ENCODE measurements at regions of chr19 and their contacts with region 1.

Region 1: GRCh38 chr19:42325273-42325895 is at the start of gene MEGF8:
- DNase-seq: peak; percentile 86 to 99 (median 97)
- ATAC-seq: peak; percentile 96
- H3K4me3 ChIP-seq: peak within 1 kb of the TSS; percentile 95
- H3K4me3 Mint-ChIP-seq: peak within 1 kb of the TSS; percentile 89 to 96 (median 94)
- H3K27ac ChIP-seq: peak within 1 kb of the TSS; percentile 84
- H3K27ac Mint-ChIP-seq: peak within 1 kb of the TSS; percentile 51 to 93 (median 83)
- H3K4me1 ChIP-seq: peaks cover 6 to 7% of the 10 kb centered on the region in 2 donors
- H3K4me1 Mint-ChIP-seq: peaks cover 13 to 29% (median 22%) of the 10 kb centered on the region in 7 donors
- H3K27me3 ChIP-seq: peaks cover 0 to 4% of the 10 kb centered on the region in 2 donors
- H3K27me3 Mint-ChIP-seq: peaks cover 6 to 33% (median 16%) of the 10 kb centered on the region in 5 donors
- total RNA-seq, gene MEGF8: 6.7 to 9.3 (median 8.6) TPM

Region 2: GRCh38 chr19:41959056-41960053 is 366.0 kb before region 1 on chr19 and contains the start of gene RABAC1:
- CTCF ChIA-PET with region 1: no interaction called
- POLR2A ChIA-PET with region 1: no interaction called
- intact Hi-C with region 1: loop called in 1 of 2 experiments (anchors 1 kb)
- DNase-seq: peak; percentile 67 to 91 (median 86)
- ATAC-seq: peak; percentile 95
- H3K4me3 ChIP-seq: peak within 1 kb of the TSS; percentile 78
- H3K4me3 Mint-ChIP-seq: peak within 1 kb of the TSS; percentile 80 to 99 (median 91)
- H3K27ac ChIP-seq: peak within 1 kb of the TSS; percentile 81
- H3K27ac Mint-ChIP-seq: peak within 1 kb of the TSS; percentile 74 to 94 (median 90)
- H3K4me1 ChIP-seq: peaks cover 8 to 9% of the 10 kb centered on the region in 2 donors
- H3K4me1 Mint-ChIP-seq: peaks cover 17 to 22% (median 18%) of the 10 kb centered on the region in 7 donors
- H3K27me3 ChIP-seq: no peaks in the 10 kb centered on the region
- H3K27me3 Mint-ChIP-seq: no peaks in the 10 kb centered on the region
- total RNA-seq, gene RABAC1: 70.4 to 90.9 (median 78.1) TPM

Region 3: GRCh38 chr19:42199440-42200115 is 125.8 kb before region 1 on chr19:
- CTCF ChIA-PET with region 1: interaction called, 3 read pairs
- POLR2A ChIA-PET with region 1: no interaction called
- intact Hi-C with region 1: loop called in 1 of 2 experiments (anchors 1 kb)
- DNase-seq: peak in 8 of 9 donors; percentile 40 to 69 (median 48)
- ATAC-seq: peak; percentile 49
- H3K4me3 ChIP-seq: peak overlapping the region; percentile 52
- H3K4me3 Mint-ChIP-seq: peak overlapping the region; percentile 78 to 97 (median 86)
- H3K27ac ChIP-seq: peak overlapping the region; percentile 82
- H3K27ac Mint-ChIP-seq: peak overlapping the region; percentile 84 to 96 (median 92)
- H3K4me1 ChIP-seq: peaks cover 71 to 75% of the 10 kb centered on the region in 2 donors
- H3K4me1 Mint-ChIP-seq: peaks cover 70 to 89% (median 80%) of the 10 kb centered on the region in 7 donors
- H3K27me3 ChIP-seq: no peaks in the 10 kb centered on the region
- H3K27me3 Mint-ChIP-seq: no peaks in the 10 kb centered on the region

Region 4: GRCh38 chr19:42268704-42269477 is 56.5 kb before region 1 on chr19 and contains the start of gene CIC:
- CTCF ChIA-PET with region 1: no interaction called
- POLR2A ChIA-PET with region 1: interaction called, 4 read pairs
- intact Hi-C with region 1: loop called in 1 of 2 experiments (anchors 1 kb)
- DNase-seq: peak; percentile 95 to 100 (median 99)
- ATAC-seq: peak; percentile 82
- H3K4me3 ChIP-seq: peak within 1 kb of the TSS; percentile 85
- H3K4me3 Mint-ChIP-seq: peak within 1 kb of the TSS in 1 of 10 donors; percentile 94
- H3K27ac ChIP-seq: peak within 1 kb of the TSS; percentile 96
- H3K27ac Mint-ChIP-seq: peak within 1 kb of the TSS in 4 of 9 donors; percentile 98 to 99 (median 99)
- H3K4me1 ChIP-seq: peaks cover 23 to 29% of the 10 kb centered on the region in 2 donors
- H3K4me1 Mint-ChIP-seq: peaks cover 8 to 31% (median 25%) of the 10 kb centered on the region in 7 donors
- H3K27me3 ChIP-seq: no peaks in the 10 kb centered on the region
- H3K27me3 Mint-ChIP-seq: no peaks in the 10 kb centered on the region
- total RNA-seq, gene CIC: 90.4 to 134 (median 102) TPM

Region 5: DNA sequence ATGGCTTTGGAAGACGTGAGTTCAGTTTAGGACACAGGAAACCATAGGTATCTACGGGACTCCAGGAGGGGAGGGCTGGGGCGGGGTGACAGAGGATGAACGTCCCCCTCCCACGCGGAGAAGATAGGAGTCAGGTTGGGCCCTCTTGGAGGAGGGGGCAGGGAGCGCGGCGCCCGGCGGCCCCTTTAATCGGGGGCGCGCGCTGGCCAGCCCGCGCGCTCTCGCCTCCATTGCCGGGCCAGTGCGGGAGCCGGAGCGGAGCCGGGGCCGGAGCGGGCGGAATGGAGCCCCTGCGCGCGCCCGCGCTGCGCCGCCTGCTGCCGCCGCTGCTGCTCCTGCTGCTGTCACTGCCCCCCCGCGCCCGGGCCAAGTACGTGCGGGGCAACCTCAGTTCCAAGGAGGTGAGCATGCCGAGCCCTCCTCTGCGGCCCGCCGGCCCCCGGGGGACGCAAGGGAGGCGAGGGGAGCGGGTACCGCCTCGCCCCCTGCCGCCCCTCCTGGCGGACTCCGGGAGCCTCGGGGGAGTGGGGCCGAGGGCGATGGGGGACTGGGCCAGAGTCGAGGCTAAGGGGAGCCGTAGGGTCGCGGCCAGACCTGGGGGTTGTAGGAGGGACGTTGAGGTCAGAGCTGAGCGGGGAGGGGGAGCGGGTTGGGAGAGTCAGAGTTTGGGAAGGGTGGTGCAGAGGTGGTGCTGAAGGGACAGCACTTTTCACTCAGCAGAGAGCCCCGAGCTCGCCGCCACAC is 12.1 kb before region 1 on chr19 and contains the start of gene TMEM145:
- CTCF ChIA-PET with region 1: no interaction called
- POLR2A ChIA-PET with region 1: interaction called, 4 read pairs
- intact Hi-C with region 1: loop called in 1 of 2 experiments (anchors 1 kb)
- DNase-seq: peak in 7 of 9 donors; percentile 14 to 62 (median 31)
- ATAC-seq: peak; percentile 77
- H3K4me3 ChIP-seq: no peak within 1 kb of the TSS
- H3K4me3 Mint-ChIP-seq: peak within 1 kb of the TSS; percentile 42 to 80 (median 70)
- H3K27ac ChIP-seq: no peak within 1 kb of the TSS
- H3K27ac Mint-ChIP-seq: no peak within 1 kb of the TSS
- H3K4me1 ChIP-seq: no peaks in the 10 kb centered on the region
- H3K4me1 Mint-ChIP-seq: peaks cover 6 to 32% (median 17%) of the 10 kb centered on the region in 7 donors
- H3K27me3 ChIP-seq: peaks cover 11 to 17% of the 10 kb centered on the region in 2 donors
- H3K27me3 Mint-ChIP-seq: peaks cover 26 to 49% (median 38%) of the 10 kb centered on the region in 5 donors
- total RNA-seq, gene TMEM145: not detected

Region 6: GRCh38 chr19:42423462-42424344 is 98.3 kb after region 1 on chr19:
- CTCF ChIA-PET with region 1: no interaction called
- POLR2A ChIA-PET with region 1: no interaction called
- intact Hi-C with region 1: loop called (anchors 1 kb)
- DNase-seq: peak; percentile 79 to 94 (median 94)
- ATAC-seq: peak; percentile 95
- H3K4me3 ChIP-seq: peak overlapping the region; percentile 70
- H3K4me3 Mint-ChIP-seq: peak overlapping the region; percentile 89 to 100 (median 98)
- H3K27ac ChIP-seq: peak overlapping the region; percentile 77
- H3K27ac Mint-ChIP-seq: peak overlapping the region; percentile 72 to 96 (median 87)
- H3K4me1 ChIP-seq: peaks cover 21 to 30% of the 10 kb centered on the region in 2 donors
- H3K4me1 Mint-ChIP-seq: peaks cover 30 to 46% (median 39%) of the 10 kb centered on the region in 7 donors
- H3K27me3 ChIP-seq: no peaks in the 10 kb centered on the region
- H3K27me3 Mint-ChIP-seq: peaks cover 0 to 4% (median 0%) of the 10 kb centered on the region in 5 donors